CD4-positive, alpha-beta memory T cell (primary cell): ENCODE measurements at regions of chr16 and their contacts with region 1.

Region 1: GRCh38 chr16:3457434-3458252 is 14.2 kb downstream of the NAA60 start:
- DNase-seq: peak; percentile 90 to 95 (median 92)
- H3K4me3 ChIP-seq: peak overlapping the region; percentile 73 to 94
- H3K4me3 Mint-ChIP-seq: peak overlapping the region; percentile 79 to 89 (median 84)
- H3K27ac ChIP-seq: peak overlapping the region; percentile 88
- H3K27ac Mint-ChIP-seq: peak overlapping the region; percentile 83 to 93 (median 92)
- H3K4me1 ChIP-seq: peaks cover 48% of the 10 kb centered on the region
- H3K4me1 Mint-ChIP-seq: peaks cover 29 to 57% (median 46%) of the 10 kb centered on the region in 4 donors
- H3K27me3 ChIP-seq: no peaks in the 10 kb centered on the region
- H3K27me3 Mint-ChIP-seq: no peaks in the 10 kb centered on the region

Region 2: GRCh38 chr16:2838928-2839327 is 618.7 kb before region 1 on chr16:
- CTCF ChIA-PET with region 1: no interaction called
- POLR2A ChIA-PET with region 1: no interaction called
- intact Hi-C with region 1: no loop called
- DNase-seq: peak; percentile 39 to 64 (median 47)
- H3K4me3 ChIP-seq: no peak overlapping the region
- H3K4me3 Mint-ChIP-seq: peak overlapping the region in 2 of 8 donors; percentile 18 to 26
- H3K27ac ChIP-seq: no peak overlapping the region
- H3K27ac Mint-ChIP-seq: peak overlapping the region in 5 of 7 donors; percentile 15 to 72 (median 64)
- H3K4me1 ChIP-seq: peaks cover 35% of the 10 kb centered on the region
- H3K4me1 Mint-ChIP-seq: peaks cover 16 to 58% (median 33%) of the 10 kb centered on the region in 4 donors
- H3K27me3 ChIP-seq: no peaks in the 10 kb centered on the region
- H3K27me3 Mint-ChIP-seq: peaks cover 0 to 7% of the 10 kb centered on the region in 2 donors

Region 3: GRCh38 chr16:3150346-3151218 is 307.1 kb before region 1 on chr16:
- CTCF ChIA-PET with region 1: no interaction called
- POLR2A ChIA-PET with region 1: interaction called, 6 read pairs
- intact Hi-C with region 1: loop called (anchors 10 kb)
- DNase-seq: peak; percentile 96 to 99 (median 97)
- H3K4me3 ChIP-seq: peak overlapping the region; percentile 77 to 92
- H3K4me3 Mint-ChIP-seq: peak overlapping the region; percentile 87 to 96 (median 91)
- H3K27ac ChIP-seq: peak overlapping the region; percentile 64
- H3K27ac Mint-ChIP-seq: peak overlapping the region; percentile 87 to 100 (median 95)
- H3K4me1 ChIP-seq: peaks cover 27% of the 10 kb centered on the region
- H3K4me1 Mint-ChIP-seq: peaks cover 22 to 47% (median 26%) of the 10 kb centered on the region in 4 donors
- H3K27me3 ChIP-seq: no peaks in the 10 kb centered on the region
- H3K27me3 Mint-ChIP-seq: peaks cover 3 to 8% of the 10 kb centered on the region in 2 donors

Region 4: DNA sequence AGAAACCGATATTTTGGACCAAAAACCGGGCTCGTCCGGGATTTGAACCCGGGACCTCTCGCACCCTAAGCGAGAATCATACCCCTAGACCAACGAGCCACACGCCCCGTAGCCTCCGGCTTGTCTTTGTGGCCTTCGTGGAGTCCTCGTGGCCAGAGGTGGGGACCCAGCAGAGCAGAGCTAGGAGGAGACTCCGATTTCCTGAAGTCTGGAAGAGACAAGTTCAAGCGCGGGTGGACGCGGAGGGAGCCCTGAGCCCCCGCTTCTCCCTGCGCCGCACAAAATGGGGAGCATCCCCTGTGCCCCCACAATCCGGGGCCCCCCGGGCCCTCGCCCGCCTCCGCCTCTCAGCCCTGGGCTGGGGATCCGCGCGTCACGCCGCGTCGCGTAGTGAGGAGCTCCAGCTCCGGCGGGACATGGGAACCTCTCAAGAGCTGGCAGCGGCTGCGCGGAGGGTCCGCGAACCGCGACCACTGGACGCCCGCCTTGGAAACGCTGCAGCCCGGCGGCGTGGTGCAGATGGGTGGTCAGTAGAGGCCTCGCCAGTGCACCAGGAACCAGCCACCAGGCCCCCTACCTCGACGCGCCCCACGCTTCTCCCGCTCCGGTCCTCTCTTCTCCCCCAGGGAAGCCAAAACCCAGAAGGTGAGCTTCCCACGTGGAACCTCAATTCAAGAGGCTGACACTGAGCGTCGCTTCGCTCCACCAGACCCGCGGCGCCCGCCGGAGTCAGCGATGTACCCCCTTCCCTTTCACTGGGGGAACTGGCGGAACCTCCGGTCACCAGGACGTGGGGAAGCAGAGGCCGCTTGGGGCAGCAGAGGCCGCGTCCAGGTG is 274.8 kb before region 1 on chr16:
- CTCF ChIA-PET with region 1: no interaction called
- POLR2A ChIA-PET with region 1: no interaction called
- intact Hi-C with region 1: loop called (anchors 2 kb)
- DNase-seq: peak in 3 of 5 donors; percentile 35 to 54 (median 45)
- H3K4me3 ChIP-seq: peak overlapping the region in 1 of 2 donors; percentile 45
- H3K4me3 Mint-ChIP-seq: peak overlapping the region; percentile 59 to 86 (median 73)
- H3K27ac ChIP-seq: no peak overlapping the region
- H3K27ac Mint-ChIP-seq: peak overlapping the region in 5 of 7 donors; percentile 37 to 89 (median 80)
- H3K4me1 ChIP-seq: peaks cover 23% of the 10 kb centered on the region
- H3K4me1 Mint-ChIP-seq: peaks cover 16 to 35% (median 21%) of the 10 kb centered on the region in 4 donors
- H3K27me3 ChIP-seq: peaks cover 52% of the 10 kb centered on the region
- H3K27me3 Mint-ChIP-seq: peaks cover 55 to 66% of the 10 kb centered on the region in 2 donors

Region 5: GRCh38 chr16:3305109-3306068 is 152.3 kb before region 1 on chr16 and contains the starts of genes TIGD7 and ZNF75A:
- CTCF ChIA-PET with region 1: no interaction called
- POLR2A ChIA-PET with region 1: interaction called, 11 read pairs
- intact Hi-C with region 1: loop called (anchors 2 kb)
- DNase-seq: peak; percentile 82 to 93 (median 85)
- H3K4me3 ChIP-seq: peak within 1 kb of the TSS; percentile 80 to 88
- H3K4me3 Mint-ChIP-seq: peak within 1 kb of the TSS; percentile 79 to 87 (median 85)
- H3K27ac ChIP-seq: peak within 1 kb of the TSS; percentile 70
- H3K27ac Mint-ChIP-seq: peak within 1 kb of the TSS; percentile 64 to 84 (median 82)
- H3K4me1 ChIP-seq: peaks cover 16% of the 10 kb centered on the region
- H3K4me1 Mint-ChIP-seq: peaks cover 7 to 13% (median 11%) of the 10 kb centered on the region in 4 donors
- H3K27me3 ChIP-seq: no peaks in the 10 kb centered on the region
- H3K27me3 Mint-ChIP-seq: no peaks in the 10 kb centered on the region
- total RNA-seq, gene TIGD7: 14.2 to 19.0 TPM
- total RNA-seq, gene ZNF75A: 82.7 to 88.1 TPM

Region 6: DNA sequence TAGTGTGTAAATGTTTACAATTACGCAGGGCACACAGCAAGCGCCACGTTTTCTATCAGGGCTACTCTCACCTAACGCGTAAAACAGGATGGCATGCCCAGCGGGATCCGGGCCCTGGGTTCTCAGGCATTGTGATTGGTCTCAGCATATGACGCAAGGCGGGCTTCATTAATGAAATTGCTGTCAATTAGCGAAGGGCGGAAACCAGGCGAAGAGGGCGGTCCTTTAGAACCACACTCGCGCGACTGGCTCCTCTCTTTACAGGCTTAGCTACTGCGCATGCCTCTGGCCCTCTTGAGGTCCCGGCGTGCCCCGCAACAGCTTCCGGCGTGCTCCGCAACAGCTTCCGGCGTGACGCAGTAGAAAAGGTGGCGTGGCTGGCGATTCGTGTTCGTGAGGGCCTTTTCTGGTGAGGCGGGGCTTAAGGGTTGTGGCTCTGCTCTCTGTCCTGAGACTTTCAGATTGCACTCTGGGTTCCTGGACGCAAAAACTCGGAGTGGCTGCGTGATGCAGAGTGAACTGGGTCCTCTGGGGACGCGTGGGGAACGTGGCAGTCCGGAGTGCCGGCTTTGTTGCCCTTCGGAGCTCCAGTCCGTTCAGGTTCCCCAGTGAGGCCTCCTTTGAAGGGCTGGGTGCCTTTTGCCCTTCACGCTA is 92.7 kb before region 1 on chr16:
- CTCF ChIA-PET with region 1: no interaction called
- POLR2A ChIA-PET with region 1: no interaction called
- intact Hi-C with region 1: no loop called
- DNase-seq: peak; percentile 81 to 90 (median 88)
- H3K4me3 ChIP-seq: peak overlapping the region in 1 of 2 donors; percentile 46
- H3K4me3 Mint-ChIP-seq: peak overlapping the region; percentile 78 to 88 (median 84)
- H3K27ac ChIP-seq: peak overlapping the region; percentile 59
- H3K27ac Mint-ChIP-seq: peak overlapping the region; percentile 71 to 95 (median 90)
- H3K4me1 ChIP-seq: peaks cover 5% of the 10 kb centered on the region
- H3K4me1 Mint-ChIP-seq: peaks cover 3 to 20% (median 7%) of the 10 kb centered on the region in 4 donors
- H3K27me3 ChIP-seq: no peaks in the 10 kb centered on the region
- H3K27me3 Mint-ChIP-seq: peaks cover 11 to 19% of the 10 kb centered on the region in 2 donors

Region 7: GRCh38 chr16:3443108-3444031 is 14.3 kb before region 1 on chr16 and contains the starts of genes NAA60 and ZNF597:
- CTCF ChIA-PET with region 1: interaction called, 4 read pairs
- POLR2A ChIA-PET with region 1: interaction called, 14 read pairs
- intact Hi-C with region 1: loop called (anchors 2 kb)
- DNase-seq: peak; percentile 80 to 88 (median 82)
- H3K4me3 ChIP-seq: peak within 1 kb of the TSS; percentile 66 to 67
- H3K4me3 Mint-ChIP-seq: peak within 1 kb of the TSS; percentile 96 to 99 (median 96)
- H3K27ac ChIP-seq: peak within 1 kb of the TSS; percentile 80
- H3K27ac Mint-ChIP-seq: peak within 1 kb of the TSS; percentile 88 to 99 (median 97)
- H3K4me1 ChIP-seq: peaks cover 24% of the 10 kb centered on the region
- H3K4me1 Mint-ChIP-seq: peaks cover 8 to 39% (median 23%) of the 10 kb centered on the region in 4 donors
- H3K27me3 ChIP-seq: no peaks in the 10 kb centered on the region
- H3K27me3 Mint-ChIP-seq: no peaks in the 10 kb centered on the region
- total RNA-seq, gene NAA60: 58.1 to 62.9 TPM
- total RNA-seq, gene ZNF597: 5.3 TPM

Region 8: DNA sequence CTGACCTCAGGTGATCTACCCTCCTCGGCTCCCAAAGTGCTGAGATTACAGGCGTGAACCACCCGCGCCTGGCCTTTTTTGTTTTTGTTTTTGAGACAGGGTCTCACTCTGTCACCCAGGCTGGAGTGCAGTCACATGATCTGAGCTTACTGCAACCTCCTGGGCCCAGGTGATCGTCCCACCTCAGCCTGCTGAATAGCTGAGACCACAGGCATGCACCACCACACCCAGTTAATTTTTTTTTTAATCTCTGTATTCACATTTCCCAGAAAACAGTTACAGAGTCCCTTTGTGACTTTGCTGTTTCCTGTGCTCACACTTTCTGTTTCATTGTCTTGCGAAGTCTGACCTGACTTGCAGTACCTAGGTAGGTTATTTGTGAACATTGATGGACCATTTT is 45.9 kb after region 1 on chr16:
- CTCF ChIA-PET with region 1: no interaction called
- POLR2A ChIA-PET with region 1: interaction called, 7 read pairs
- intact Hi-C with region 1: loop called (anchors 2 kb)
- DNase-seq: peak; percentile 61 to 76 (median 67)
- H3K4me3 ChIP-seq: peak overlapping the region in 1 of 2 donors; percentile 12
- H3K4me3 Mint-ChIP-seq: peak overlapping the region; percentile 68 to 84 (median 79)
- H3K27ac ChIP-seq: peak overlapping the region; percentile 4
- H3K27ac Mint-ChIP-seq: peak overlapping the region; percentile 88 to 95 (median 93)
- H3K4me1 ChIP-seq: peaks cover 65% of the 10 kb centered on the region
- H3K4me1 Mint-ChIP-seq: peaks cover 45 to 74% (median 55%) of the 10 kb centered on the region in 4 donors
- H3K27me3 ChIP-seq: no peaks in the 10 kb centered on the region
- H3K27me3 Mint-ChIP-seq: no peaks in the 10 kb centered on the region

Region 9: GRCh38 chr16:3576211-3576610 is 118.6 kb after region 1 on chr16:
- CTCF ChIA-PET with region 1: no interaction called
- POLR2A ChIA-PET with region 1: no interaction called
- intact Hi-C with region 1: no loop called
- DNase-seq: peak in 4 of 5 donors; percentile 8 to 43 (median 22)
- H3K4me3 ChIP-seq: peak overlapping the region; percentile 61 to 85
- H3K4me3 Mint-ChIP-seq: peak overlapping the region; percentile 94 to 99 (median 98)
- H3K27ac ChIP-seq: peak overlapping the region; percentile 75
- H3K27ac Mint-ChIP-seq: peak overlapping the region; percentile 90 to 98 (median 97)
- H3K4me1 ChIP-seq: peaks cover 61% of the 10 kb centered on the region
- H3K4me1 Mint-ChIP-seq: peaks cover 30 to 81% (median 56%) of the 10 kb centered on the region in 4 donors
- H3K27me3 ChIP-seq: no peaks in the 10 kb centered on the region
- H3K27me3 Mint-ChIP-seq: no peaks in the 10 kb centered on the region